Ovary (tissue), 10 donors: ENCODE measurements at regions of chrX and their contacts with region 1.

Region 1: DNA sequence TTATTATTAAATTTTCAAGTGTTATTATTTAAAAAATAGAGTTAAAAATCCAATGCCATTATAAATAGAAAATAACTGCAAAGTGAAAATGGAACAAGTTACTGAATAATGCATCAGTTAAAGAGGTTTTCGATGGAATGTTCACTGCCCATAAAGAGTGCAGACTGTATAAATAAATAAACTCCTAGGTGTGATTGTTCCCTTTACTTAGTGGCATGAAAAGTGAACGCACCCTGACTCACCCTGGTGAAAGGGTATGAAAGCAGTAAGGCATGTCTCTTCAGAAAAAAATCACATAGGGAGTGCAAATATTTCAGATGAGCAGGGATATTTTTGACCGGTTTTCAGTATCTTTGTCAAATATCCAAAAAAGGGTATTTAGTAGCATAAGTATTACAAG is 387.8 kb downstream of the DCAF12L2 start:
- DNase-seq: no peak
- H3K4me3 ChIP-seq: no peak overlapping the region
- H3K27ac ChIP-seq: no peak overlapping the region
- H3K4me1 ChIP-seq: no peaks in the 10 kb centered on the region
- H3K27me3 ChIP-seq: no peaks in the 10 kb centered on the region
- CTCF ChIP-seq: no peak
- EP300 ChIP-seq: no peak
- POLR2A ChIP-seq: no peak

Region 2: GRCh38 chrX:124328765-124329164 is 1449.5 kb before region 1 on chrX:
- intact Hi-C with region 1: loop called in 1 of 4 experiments (anchors 5 kb)
- DNase-seq: no peak
- H3K4me3 ChIP-seq: no peak overlapping the region
- H3K27ac ChIP-seq: no peak overlapping the region
- H3K4me1 ChIP-seq: no peaks in the 10 kb centered on the region
- H3K27me3 ChIP-seq: no peaks in the 10 kb centered on the region
- CTCF ChIP-seq: no peak
- EP300 ChIP-seq: no peak
- POLR2A ChIP-seq: no peak